Activated CD4-positive, alpha-beta T cell treated with anti-CD3 and anti-CD28 coated beads for 36 hours (primary cell): ENCODE measurements at regions of chr3 and their contacts with region 1.

Region 1: DNA sequence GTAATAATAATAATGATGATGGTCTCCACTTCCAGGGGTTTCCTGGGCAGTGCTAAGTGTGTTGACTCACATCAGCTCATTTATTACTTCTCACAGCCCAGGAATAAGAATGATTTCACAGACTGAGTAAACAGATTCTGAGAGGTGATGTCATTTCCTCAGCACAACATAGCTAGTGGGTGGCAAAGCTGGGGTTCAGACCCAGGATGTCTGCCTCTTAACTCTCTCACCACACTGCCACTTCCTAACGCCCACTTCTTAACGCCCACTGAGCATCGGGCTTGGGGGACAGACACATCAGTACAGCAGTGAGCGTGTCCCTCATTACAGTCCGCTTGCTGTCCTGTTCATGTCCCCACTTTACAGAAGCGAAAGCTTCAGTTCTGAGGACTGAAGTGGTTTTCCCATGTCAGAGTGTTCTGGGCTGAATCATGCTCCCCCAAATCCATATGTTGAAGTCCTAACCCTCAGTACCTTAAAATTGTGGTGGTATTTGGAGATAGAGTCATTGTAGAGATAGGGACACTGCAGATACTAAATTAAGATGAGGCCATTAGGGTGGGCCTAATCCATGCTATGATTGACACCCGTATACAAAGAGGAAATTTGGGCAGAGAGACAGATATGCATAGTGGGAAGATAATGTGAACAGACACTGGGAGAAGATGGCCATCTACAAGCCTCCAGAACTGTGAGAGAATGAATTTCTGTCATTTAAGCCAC is 68.0 kb downstream of the ATP2B2 start:
- DNase-seq: peak; percentile 83
- ATAC-seq: peak; percentile 94
- H3K4me3 Mint-ChIP-seq: no peak overlapping the region
- H3K27ac Mint-ChIP-seq: peak overlapping the region; percentile 58
- H3K4me1 Mint-ChIP-seq: peaks cover 35% of the 10 kb centered on the region
- H3K27me3 Mint-ChIP-seq: no peaks in the 10 kb centered on the region

Region 2: GRCh38 chr3:9491506-9491905 is 945.9 kb before region 1 on chr3:
- CTCF ChIA-PET with region 1: no interaction called
- POLR2A ChIA-PET with region 1: interaction called, 11 read pairs
- intact Hi-C with region 1: no loop called
- DNase-seq: no peak
- ATAC-seq: no peak
- H3K4me3 Mint-ChIP-seq: no peak overlapping the region
- H3K27ac Mint-ChIP-seq: no peak overlapping the region
- H3K4me1 Mint-ChIP-seq: no peaks in the 10 kb centered on the region
- H3K27me3 Mint-ChIP-seq: no peaks in the 10 kb centered on the region

Region 3: GRCh38 chr3:10361375-10361774 is 76.1 kb before region 1 on chr3:
- CTCF ChIA-PET with region 1: interaction called, 3 read pairs
- POLR2A ChIA-PET with region 1: no interaction called
- intact Hi-C with region 1: loop called in 1 of 2 experiments (anchors 1 kb)
- DNase-seq: no peak
- ATAC-seq: no peak
- H3K4me3 Mint-ChIP-seq: no peak overlapping the region
- H3K27ac Mint-ChIP-seq: no peak overlapping the region
- H3K4me1 Mint-ChIP-seq: peaks cover 36% of the 10 kb centered on the region
- H3K27me3 Mint-ChIP-seq: peaks cover 12% of the 10 kb centered on the region

Region 4: DNA sequence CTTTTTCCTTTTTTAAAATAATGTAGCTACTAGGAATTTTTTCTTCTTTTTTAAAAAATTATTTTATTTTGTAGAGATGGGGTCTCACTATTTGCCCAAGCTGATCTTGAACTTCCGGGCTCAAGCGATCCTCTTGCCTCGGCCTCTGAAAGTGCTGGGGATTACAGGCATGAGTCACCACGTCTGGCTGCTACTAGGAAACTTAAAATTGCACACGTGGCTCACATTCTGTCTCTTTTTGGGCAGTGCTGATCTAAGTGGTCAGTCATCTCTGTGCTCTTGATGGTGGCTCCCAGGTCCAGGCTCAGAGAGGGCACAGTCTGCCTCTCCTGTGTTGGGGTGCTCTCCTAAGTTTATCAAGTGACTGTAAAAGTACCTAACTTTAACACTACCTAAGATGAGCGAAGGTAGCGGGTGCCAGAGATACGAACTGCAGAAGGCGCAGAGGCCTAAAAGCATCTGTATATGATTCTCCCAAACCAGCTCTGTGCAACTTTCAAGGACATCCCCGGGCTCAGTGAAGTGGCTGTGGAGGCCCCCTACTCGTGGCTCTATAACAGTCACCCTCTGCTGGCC is 63.7 kb before region 1 on chr3:
- CTCF ChIA-PET with region 1: no interaction called
- POLR2A ChIA-PET with region 1: no interaction called
- intact Hi-C with region 1: no loop called
- DNase-seq: no peak
- ATAC-seq: no peak
- H3K4me3 Mint-ChIP-seq: no peak overlapping the region
- H3K27ac Mint-ChIP-seq: no peak overlapping the region
- H3K4me1 Mint-ChIP-seq: peaks cover 7% of the 10 kb centered on the region
- H3K27me3 Mint-ChIP-seq: peaks cover 11% of the 10 kb centered on the region